ENCODE measurements at regions of chr11 and their contacts with region 1.

Region 1: DNA sequence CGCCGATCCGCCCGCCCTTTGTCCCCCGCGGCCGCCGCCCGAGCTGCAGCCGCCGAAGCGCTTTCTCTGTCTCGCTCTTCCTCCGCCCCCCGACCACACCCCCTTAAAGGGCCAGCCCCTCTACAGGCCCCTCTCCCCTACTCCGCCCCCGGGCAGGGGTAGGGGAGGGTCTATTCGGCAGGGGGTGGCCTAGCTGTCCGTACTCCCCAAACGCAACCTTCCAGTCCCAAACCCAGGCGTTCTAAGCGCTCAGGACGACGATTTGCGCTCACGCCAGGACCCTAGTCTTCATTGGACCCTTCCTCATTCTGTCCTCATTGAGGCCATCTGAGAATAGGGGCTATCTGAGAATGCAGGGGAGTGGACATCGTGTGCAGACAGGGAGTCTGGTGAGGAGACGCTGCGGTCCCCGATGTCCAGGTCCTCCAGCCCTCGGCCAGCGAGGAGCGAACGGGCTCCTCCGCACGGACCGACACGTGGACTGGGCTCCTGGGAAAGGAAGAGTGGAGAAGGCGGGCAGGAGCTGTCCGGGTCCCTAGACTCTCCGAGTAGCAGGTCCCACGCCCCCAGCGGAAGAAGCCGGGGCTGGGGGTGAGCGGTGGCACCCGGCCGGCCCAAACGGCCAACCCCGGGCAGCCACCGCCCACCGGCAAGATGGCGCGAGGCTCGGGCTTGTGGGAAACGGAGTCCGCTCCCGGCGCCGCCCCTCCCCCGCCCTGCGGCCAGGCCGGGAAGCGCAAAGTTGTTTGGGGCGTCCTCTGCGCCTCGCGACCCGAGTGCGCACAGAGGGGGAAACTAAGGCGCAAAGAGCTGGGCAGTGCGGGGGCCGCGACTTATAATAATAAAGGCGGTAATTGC is at the start of gene PPP1R14B:
- DNase-seq: no peak
- H3K4me3 ChIP-seq: peak within 1 kb of the TSS; percentile 88
- CTCF ChIP-seq: no peak

Region 2: GRCh38 chr11:63986156-63986931 is 260.8 kb before region 1 on chr11 and contains the start of gene OTUB1:
- CTCF ChIA-PET with region 1: no interaction called
- POLR2A ChIA-PET with region 1: no interaction called
- DNase-seq: peak; percentile 36
- H3K4me3 ChIP-seq: peak within 1 kb of the TSS; percentile 96
- CTCF ChIP-seq: no peak

Region 3: GRCh38 chr11:64232166-64232919 is 14.8 kb before region 1 on chr11:
- CTCF ChIA-PET with region 1: interaction called, 25 read pairs
- POLR2A ChIA-PET with region 1: interaction called, 5 read pairs
- DNase-seq: no peak
- H3K4me3 ChIP-seq: no peak overlapping the region
- CTCF ChIP-seq: no peak

Region 4: GRCh38 chr11:64269380-64270234 is 22.5 kb after region 1 on chr11:
- CTCF ChIA-PET with region 1: interaction called, 224 read pairs
- POLR2A ChIA-PET with region 1: interaction called, 61 read pairs
- DNase-seq: peak; percentile 99
- H3K4me3 ChIP-seq: peak overlapping the region; percentile 69
- CTCF ChIP-seq: no peak

Region 5: GRCh38 chr11:64291752-64292459 is 44.8 kb after region 1 on chr11:
- CTCF ChIA-PET with region 1: interaction called, 10 read pairs
- POLR2A ChIA-PET with region 1: no interaction called
- DNase-seq: no peak
- H3K4me3 ChIP-seq: peak overlapping the region; percentile 29
- CTCF ChIP-seq: no peak

Region 6: GRCh38 chr11:64419818-64420485 is 172.9 kb after region 1 on chr11:
- CTCF ChIA-PET with region 1: no interaction called
- POLR2A ChIA-PET with region 1: no interaction called
- DNase-seq: no peak
- H3K4me3 ChIP-seq: no peak overlapping the region
- CTCF ChIP-seq: no peak

Region 7: GRCh38 chr11:64436000-64436399 is 188.9 kb after region 1 on chr11:
- CTCF ChIA-PET with region 1: no interaction called
- POLR2A ChIA-PET with region 1: no interaction called
- DNase-seq: no peak
- H3K4me3 ChIP-seq: no peak overlapping the region
- CTCF ChIP-seq: no peak

Region 8: DNA sequence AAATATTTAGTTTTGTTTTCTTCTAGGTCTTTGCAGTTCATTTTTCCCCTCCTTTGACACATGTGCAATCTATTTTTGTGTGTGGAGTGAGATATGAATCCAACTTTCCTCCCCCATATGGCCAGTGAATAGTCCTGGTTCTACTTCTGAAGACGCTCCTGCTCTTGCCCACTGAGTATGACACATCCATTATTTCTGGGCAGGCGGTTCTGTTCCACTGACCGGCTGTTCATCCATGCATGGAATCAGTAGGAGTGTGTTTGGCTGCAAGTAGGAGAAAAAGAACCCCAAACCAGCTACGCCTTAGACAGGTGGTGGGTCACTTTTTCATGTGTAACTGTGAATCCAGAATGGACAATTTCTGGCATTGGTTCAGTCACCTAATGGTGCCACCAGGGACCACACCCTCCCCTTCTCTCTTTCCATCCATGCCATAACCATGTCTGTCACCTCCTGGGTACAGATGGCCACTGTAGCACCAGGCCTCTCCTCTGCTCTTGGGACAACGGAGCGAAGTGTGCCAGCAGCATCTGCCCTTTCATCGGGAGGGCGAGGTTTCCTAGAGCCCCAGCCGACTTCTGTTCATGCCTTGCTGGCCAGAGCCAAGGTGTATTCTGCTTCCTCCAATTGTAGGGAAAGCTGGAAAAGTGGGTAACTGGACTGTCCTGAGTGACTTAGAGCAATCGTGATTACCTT is 276.5 kb after region 1 on chr11:
- CTCF ChIA-PET with region 1: no interaction called
- POLR2A ChIA-PET with region 1: no interaction called
- DNase-seq: no peak
- H3K4me3 ChIP-seq: no peak overlapping the region
- CTCF ChIP-seq: no peak

Measured in AG04449 (cell line).